AG04450 (cell line): ENCODE measurements at regions of chr19 and their contacts with region 1.

Region 1: GRCh38 chr19:13093407-13094105 is 9.1 kb downstream of the LYL1 start:
- DNase-seq: peak; percentile 60
- H3K4me3 ChIP-seq: no peak overlapping the region
- H3K27ac ChIP-seq: peak overlapping the region; percentile 21
- H3K27me3 ChIP-seq: no peaks in the 10 kb centered on the region
- CTCF ChIP-seq: peak; percentile 89

Region 2: DNA sequence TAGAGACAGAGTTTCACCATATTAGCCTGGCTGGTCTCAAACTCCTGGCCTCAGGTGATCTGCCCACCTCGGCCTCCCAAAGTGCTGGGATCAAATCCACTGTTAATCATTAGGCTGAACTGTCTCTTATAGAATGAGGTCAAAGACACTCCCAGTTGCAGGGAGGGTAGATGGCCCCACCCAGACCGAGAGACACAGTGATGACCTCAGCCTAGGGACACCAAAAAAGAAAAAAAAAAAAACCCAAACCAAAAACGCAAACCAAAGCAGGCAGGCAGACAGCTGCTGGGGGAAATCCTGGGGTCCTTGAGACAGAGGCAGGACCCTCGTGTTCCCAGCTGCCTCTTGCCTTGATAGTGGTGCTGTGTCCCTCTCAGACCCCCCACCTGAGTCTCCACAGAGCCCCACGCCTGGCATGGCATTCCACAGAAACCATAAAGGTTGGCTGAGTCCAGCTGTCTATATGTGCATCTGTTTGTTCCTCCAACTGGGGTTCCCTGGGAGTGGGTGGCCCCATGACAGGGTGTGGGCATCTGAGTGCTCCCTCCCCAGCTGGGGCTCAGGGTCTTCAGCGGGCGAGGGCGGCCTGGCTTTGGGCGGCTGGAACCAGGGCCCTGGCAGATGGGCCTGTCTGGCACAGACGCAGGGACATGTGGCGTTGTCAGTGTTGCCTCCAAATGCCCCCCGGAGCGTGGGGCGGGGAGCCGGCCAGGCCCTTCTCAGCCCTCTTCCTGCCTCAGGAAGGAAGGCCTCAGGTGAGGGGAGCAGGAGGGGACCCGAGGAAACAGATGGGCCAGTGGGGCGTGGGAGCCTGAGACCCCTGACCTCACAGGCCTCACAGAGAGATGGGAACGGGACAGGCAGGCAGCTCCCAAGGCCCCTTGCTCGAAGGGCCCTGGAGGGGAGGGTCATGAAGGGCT is 119.0 kb before region 1 on chr19:
- CTCF ChIA-PET with region 1: interaction called, 150 read pairs
- POLR2A ChIA-PET with region 1: interaction called, 3 read pairs
- DNase-seq: no peak
- H3K4me3 ChIP-seq: no peak overlapping the region
- H3K27ac ChIP-seq: no peak overlapping the region
- H3K27me3 ChIP-seq: no peaks in the 10 kb centered on the region
- CTCF ChIP-seq: no peak

Region 3: DNA sequence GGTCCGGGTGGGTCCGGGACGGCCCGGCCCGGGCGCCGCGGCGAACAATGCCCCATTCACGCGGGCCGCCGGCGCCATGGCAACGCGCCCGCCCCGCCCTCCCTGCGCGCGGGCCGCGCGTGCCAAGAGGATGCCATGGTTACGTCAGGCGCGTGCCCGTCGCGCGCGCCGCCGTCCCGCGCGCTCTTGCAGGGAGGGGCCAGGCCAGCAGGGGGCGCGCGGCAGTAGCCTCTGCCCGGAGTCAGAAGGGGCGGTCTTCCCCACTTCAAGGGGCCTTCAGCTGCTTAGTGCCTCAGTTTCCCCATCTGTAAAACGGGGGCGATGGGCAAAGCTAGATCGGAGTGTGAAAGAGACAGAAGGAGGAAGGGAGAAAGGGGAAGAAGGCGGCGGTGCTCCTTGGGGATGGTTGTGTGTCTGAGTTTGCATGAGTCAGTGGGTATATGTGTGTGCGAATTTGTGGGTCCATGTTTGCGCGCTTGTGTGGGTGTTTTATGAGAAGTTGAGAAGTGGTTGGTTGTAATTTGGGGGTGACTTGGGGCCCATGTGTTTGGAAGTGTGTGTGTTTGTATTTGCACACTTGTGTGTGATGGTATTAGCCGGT is 109.9 kb before region 1 on chr19:
- CTCF ChIA-PET with region 1: interaction called, 150 read pairs
- POLR2A ChIA-PET with region 1: no interaction called
- DNase-seq: peak; percentile 30
- H3K4me3 ChIP-seq: peak overlapping the region; percentile 50
- H3K27ac ChIP-seq: no peak overlapping the region
- H3K27me3 ChIP-seq: no peaks in the 10 kb centered on the region
- CTCF ChIP-seq: peak; percentile 76

Region 4: DNA sequence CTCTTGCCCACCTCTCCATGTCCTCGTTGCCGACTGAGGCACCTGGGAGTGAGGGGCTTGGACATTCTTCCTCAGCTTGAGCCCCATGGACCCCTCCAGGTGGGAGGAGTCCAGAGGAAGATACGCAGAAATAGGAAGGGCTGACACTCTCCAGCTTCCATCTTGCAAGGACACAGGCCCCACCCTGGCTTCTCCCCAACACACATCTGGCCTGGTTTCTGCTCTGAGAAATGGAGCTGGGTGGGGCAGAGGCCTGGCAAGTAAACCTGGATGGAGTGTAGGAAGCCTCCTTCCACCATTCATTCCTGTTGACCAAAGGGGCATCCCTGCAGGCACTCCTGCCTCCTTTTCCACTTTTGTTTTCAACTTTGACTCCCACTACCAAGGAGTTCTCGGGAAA is 47.7 kb before region 1 on chr19:
- CTCF ChIA-PET with region 1: no interaction called
- POLR2A ChIA-PET with region 1: no interaction called
- DNase-seq: no peak
- H3K4me3 ChIP-seq: no peak overlapping the region
- H3K27ac ChIP-seq: no peak overlapping the region
- H3K27me3 ChIP-seq: no peaks in the 10 kb centered on the region
- CTCF ChIP-seq: no peak

Region 5: GRCh38 chr19:13082192-13083007 is 11.2 kb before region 1 on chr19:
- CTCF ChIA-PET with region 1: interaction called, 26 read pairs
- POLR2A ChIA-PET with region 1: interaction called, 3 read pairs
- DNase-seq: no peak
- H3K4me3 ChIP-seq: no peak overlapping the region
- H3K27ac ChIP-seq: peak overlapping the region; percentile 31
- H3K27me3 ChIP-seq: no peaks in the 10 kb centered on the region
- CTCF ChIP-seq: peak; percentile 34; the same call in 1 of the 2 replicates